ENCODE measurements at regions of chr19 and their contacts with region 1.

Region 1: DNA sequence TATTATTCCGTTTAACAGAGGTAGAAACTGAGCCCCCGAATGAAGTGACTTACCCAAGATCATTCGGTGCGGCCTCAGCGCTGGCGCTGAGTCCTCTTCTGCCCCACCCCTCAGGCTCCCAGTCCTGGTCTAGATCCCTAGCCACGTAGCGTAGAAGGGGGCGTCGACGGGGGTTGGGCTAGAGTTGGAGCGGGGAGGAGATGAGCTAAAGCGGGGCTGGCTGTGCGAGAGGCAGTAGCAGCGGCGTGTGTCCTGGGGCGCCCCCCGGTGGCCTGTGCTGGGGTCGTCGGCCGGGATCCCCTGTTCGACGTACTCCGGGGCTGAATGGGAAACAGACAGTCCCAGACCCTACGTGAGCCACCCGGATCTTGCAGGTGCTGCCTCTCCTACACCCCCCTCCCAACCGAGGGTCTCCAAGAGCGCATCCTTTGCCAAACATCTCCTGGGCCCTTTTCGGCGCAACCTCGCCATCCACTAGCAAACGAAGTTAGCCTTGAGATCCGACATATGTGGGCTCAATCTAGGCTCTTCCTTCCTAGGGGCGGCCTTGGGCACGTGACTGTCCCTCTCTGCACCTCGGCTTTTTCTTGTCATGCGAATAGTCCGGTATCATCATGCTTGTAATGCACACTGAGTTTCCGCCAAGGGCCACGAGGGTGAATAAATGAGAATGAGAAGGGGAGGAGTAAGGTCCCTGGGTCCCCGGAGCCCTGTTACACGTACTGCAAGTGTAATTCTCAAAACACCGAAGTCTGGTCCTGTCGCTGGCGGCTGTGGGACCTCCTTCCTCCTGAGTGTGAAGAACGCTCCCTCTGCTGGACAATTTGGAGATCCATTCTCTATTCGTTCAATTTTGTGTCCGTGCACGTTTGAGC is 47.7 kb downstream of the CYP4F22 start:
- DNase-seq: peak; percentile 99
- ATAC-seq: peak; percentile 89
- H3K4me3 Mint-ChIP-seq: peak overlapping the region; percentile 61
- H3K27ac Mint-ChIP-seq: peak overlapping the region; percentile 79
- H3K4me1 Mint-ChIP-seq: peaks cover 6% of the 10 kb centered on the region
- H3K27me3 Mint-ChIP-seq: peaks cover 41% of the 10 kb centered on the region
- CTCF ChIP-seq: peak; percentile 83

Region 2: GRCh38 chr19:15379083-15379995 is 176.7 kb before region 1 on chr19 and contains the start of gene AKAP8:
- CTCF ChIA-PET with region 1: interaction called, 16 read pairs
- POLR2A ChIA-PET with region 1: interaction called, 4 read pairs
- DNase-seq: peak; percentile 98
- ATAC-seq: peak; percentile 89
- H3K4me3 Mint-ChIP-seq: peak within 1 kb of the TSS; percentile 99
- H3K27ac Mint-ChIP-seq: peak within 1 kb of the TSS; percentile 98
- H3K4me1 Mint-ChIP-seq: peaks cover 29% of the 10 kb centered on the region
- H3K27me3 Mint-ChIP-seq: no peaks in the 10 kb centered on the region
- CTCF ChIP-seq: no peak
- total RNA-seq, gene AKAP8: 49.1 to 65.9 TPM (median 51.3 TPM) in 3 replicates

Region 3: GRCh38 chr19:15432629-15433518 is 123.1 kb before region 1 on chr19:
- CTCF ChIA-PET with region 1: interaction called, 14 read pairs
- POLR2A ChIA-PET with region 1: interaction called, 9 read pairs
- DNase-seq: peak; percentile 93
- ATAC-seq: peak; percentile 73
- H3K4me3 Mint-ChIP-seq: peak overlapping the region; percentile 98
- H3K27ac Mint-ChIP-seq: peak overlapping the region; percentile 97
- H3K4me1 Mint-ChIP-seq: peaks cover 19% of the 10 kb centered on the region
- H3K27me3 Mint-ChIP-seq: no peaks in the 10 kb centered on the region; the same call in 1 of the 2 replicates
- CTCF ChIP-seq: no peak

Region 4: GRCh38 chr19:15456871-15457700 is 98.9 kb before region 1 on chr19:
- CTCF ChIA-PET with region 1: interaction called, 46 read pairs
- POLR2A ChIA-PET with region 1: interaction called, 3 read pairs
- DNase-seq: peak; percentile 97
- ATAC-seq: peak; percentile 62
- H3K4me3 Mint-ChIP-seq: peak overlapping the region; percentile 56
- H3K27ac Mint-ChIP-seq: no peak overlapping the region
- H3K4me1 Mint-ChIP-seq: peaks cover 19% of the 10 kb centered on the region
- H3K27me3 Mint-ChIP-seq: peaks cover 92% of the 10 kb centered on the region
- CTCF ChIP-seq: no peak

Region 5: GRCh38 chr19:15614507-15615379 is 58.7 kb after region 1 on chr19 and contains the start of gene CYP4F8:
- CTCF ChIA-PET with region 1: no interaction called
- POLR2A ChIA-PET with region 1: no interaction called
- DNase-seq: no peak
- ATAC-seq: no peak
- H3K4me3 Mint-ChIP-seq: no peak within 1 kb of the TSS
- H3K27ac Mint-ChIP-seq: no peak within 1 kb of the TSS
- H3K4me1 Mint-ChIP-seq: no peaks in the 10 kb centered on the region
- H3K27me3 Mint-ChIP-seq: peaks cover 10% of the 10 kb centered on the region; the same call in 1 of the 2 replicates
- CTCF ChIP-seq: no peak
- total RNA-seq, gene CYP4F8: not detected in 3 replicates

Measured in WTC11 (cell line).